ENCODE measurements at regions of chr5 and their contacts with region 1.

Region 1: GRCh38 chr5:116038817-116039216 is 6.5 kb downstream of the ARL14EPL start:
- DNase-seq: no peak
- ATAC-seq: no peak
- H3K4me3 ChIP-seq: no peak overlapping the region
- H3K27ac ChIP-seq: no peak overlapping the region
- H3K4me1 ChIP-seq: no peaks in the 10 kb centered on the region
- H3K27me3 ChIP-seq: peaks cover 7% of the 10 kb centered on the region; the same call in 1 of the 2 replicates
- CTCF ChIP-seq: no peak

Region 2: DNA sequence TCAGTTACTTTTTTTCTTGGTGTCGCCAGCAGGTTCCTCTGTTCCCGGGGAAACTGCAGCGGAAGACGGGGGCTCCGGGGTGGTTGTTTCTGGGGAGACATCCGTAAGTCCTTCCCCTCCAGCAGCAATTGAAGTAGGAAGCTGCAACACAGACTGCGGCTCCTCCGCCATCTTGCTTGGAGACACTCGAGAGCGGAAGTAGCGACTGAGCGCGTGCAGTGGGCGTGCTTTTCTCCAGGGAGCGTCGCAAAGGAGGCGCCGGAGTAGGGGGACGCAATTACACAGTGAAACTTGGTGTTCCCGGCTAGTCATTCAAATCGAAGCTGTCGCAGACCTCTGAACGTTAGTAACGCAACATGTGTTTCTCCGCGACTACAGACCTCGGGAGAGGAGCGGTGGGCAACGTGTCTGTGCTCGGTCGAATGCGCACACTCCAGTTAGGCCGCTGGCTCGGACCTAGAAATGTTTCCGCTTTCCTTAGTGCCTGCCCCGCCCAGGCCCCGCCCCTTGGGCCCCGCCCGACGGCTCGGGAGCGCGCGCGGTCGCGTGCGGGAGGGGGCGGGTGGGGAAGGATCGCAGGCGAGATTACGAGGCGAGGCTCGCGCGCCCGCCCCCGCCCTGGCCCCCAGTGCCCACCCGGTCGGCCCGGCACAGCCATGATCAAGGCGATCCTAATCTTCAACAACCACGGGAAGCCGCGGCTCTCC is 197.3 kb before region 1 on chr5 and contains the starts of genes AP3S1 and ATG12:
- CTCF ChIA-PET with region 1: no interaction called
- POLR2A ChIA-PET with region 1: no interaction called
- in situ Hi-C with region 1: no loop called
- intact Hi-C with region 1: loop called (anchors 5 kb)
- DNase-seq: peak; percentile 94
- ATAC-seq: peak; percentile 94
- H3K4me3 ChIP-seq: peak within 1 kb of the TSS; percentile 82 to 98
- H3K27ac ChIP-seq: peak within 1 kb of the TSS; percentile 97
- H3K4me1 ChIP-seq: peaks cover 24% of the 10 kb centered on the region
- H3K27me3 ChIP-seq: no peaks in the 10 kb centered on the region
- CTCF ChIP-seq: no peak
- total RNA-seq, gene AP3S1: 88.8 TPM
- total RNA-seq, gene ATG12: 52.0 TPM

Region 3: DNA sequence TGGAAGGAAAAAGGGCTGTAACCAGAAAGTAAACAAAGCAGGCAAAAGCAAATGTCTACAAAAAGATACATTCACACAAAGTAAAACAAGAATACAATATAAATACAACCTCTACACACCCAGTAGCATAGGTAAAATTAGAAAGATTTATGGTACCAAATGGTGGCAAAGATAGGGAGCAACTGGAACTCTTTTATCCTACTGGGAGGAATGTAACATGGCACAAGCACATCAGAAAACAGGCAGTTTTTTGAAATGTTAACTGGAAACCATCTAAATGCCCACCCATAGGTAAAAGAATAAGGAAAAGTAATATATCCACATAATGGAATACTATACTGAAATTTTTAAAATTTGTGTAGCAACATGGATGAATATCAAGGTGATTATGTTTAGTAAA is 15.2 kb before region 1 on chr5:
- CTCF ChIA-PET with region 1: no interaction called
- POLR2A ChIA-PET with region 1: no interaction called
- in situ Hi-C with region 1: no loop called
- intact Hi-C with region 1: no loop called
- DNase-seq: no peak
- ATAC-seq: no peak
- H3K4me3 ChIP-seq: no peak overlapping the region
- H3K27ac ChIP-seq: no peak overlapping the region
- H3K4me1 ChIP-seq: no peaks in the 10 kb centered on the region
- H3K27me3 ChIP-seq: 0 out of 2 replicates have a peak, but pooled peaks cover 2% of the 10 kb centered on the region
- CTCF ChIP-seq: no peak

Measured in Panc1 (cell line).